ENCODE measurements at regions of chr5 and their contacts with region 1.

Region 1: GRCh38 chr5:74810915-74811314 is 43.9 kb downstream of the NSA2 start:
- H3K4me3 ChIP-seq: no peak overlapping the region
- H3K27ac ChIP-seq: no peak overlapping the region
- H3K4me1 ChIP-seq: peaks cover 3% of the 10 kb centered on the region
- CTCF ChIP-seq: no peak

Region 2: GRCh38 chr5:73437101-73437776 is 1373.7 kb before region 1 on chr5:
- CTCF ChIA-PET with region 1: no interaction called
- POLR2A ChIA-PET with region 1: no interaction called
- H3K4me3 ChIP-seq: peak overlapping the region; percentile 44
- H3K27ac ChIP-seq: peak overlapping the region; percentile 99
- H3K4me1 ChIP-seq: peaks cover 40% of the 10 kb centered on the region
- CTCF ChIP-seq: peak; percentile 93

Region 3: DNA sequence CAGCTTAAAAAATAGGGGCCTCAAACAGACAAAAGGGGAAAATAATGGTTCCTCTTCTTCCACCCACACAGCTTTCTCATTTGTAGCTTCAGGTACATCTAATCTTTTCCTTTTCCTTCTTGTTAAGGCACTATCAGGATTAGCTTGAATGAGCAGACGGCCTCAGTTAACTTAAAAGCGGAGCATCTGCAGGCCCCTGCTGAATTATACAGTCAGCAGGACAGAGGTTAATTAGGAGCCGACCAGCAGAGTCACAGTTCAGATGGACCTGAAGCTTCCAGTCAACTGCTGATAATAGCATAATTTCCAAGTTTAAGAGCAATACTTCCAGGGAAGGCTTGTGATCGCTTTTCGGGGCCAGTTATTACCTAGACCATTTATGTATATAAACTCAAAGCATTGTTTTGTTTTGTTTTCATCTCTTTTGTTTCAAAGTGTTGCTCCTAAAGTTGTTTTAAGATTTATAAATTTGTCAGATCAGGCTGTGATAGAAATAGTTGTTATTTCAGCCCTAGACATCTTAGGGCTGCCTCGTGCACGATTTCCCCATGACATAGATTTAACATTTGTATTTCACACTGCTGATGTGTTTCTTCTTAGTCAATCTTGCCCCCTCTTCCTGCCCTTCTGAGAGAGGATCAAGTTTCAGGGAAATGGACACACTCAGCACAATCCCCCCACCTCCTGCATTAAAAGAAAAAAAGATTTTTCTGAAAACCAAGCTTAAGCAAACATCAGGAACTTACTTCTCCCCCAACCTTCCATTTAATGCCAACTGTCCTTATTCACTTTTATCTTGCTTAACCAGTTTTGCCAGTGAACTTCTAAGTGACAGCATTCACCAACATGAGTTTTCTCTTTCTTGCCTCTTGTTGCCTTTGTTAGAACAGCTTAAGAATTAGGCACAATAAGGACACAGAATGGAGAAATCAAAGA is 735.1 kb before region 1 on chr5:
- CTCF ChIA-PET with region 1: interaction called, 10 read pairs
- POLR2A ChIA-PET with region 1: no interaction called
- H3K4me3 ChIP-seq: no peak overlapping the region
- H3K27ac ChIP-seq: no peak overlapping the region
- H3K4me1 ChIP-seq: peaks cover 40% of the 10 kb centered on the region
- CTCF ChIP-seq: no peak

Region 4: GRCh38 chr5:74822288-74822687 is 11.4 kb after region 1 on chr5:
- CTCF ChIA-PET with region 1: no interaction called
- POLR2A ChIA-PET with region 1: no interaction called
- H3K4me3 ChIP-seq: no peak overlapping the region
- H3K27ac ChIP-seq: no peak overlapping the region
- H3K4me1 ChIP-seq: no peaks in the 10 kb centered on the region
- CTCF ChIP-seq: no peak

Measured in HEK293 (cell line).